ENCODE measurements at regions of chr6 and their contacts with region 1.

Region 1: GRCh38 chr6:24720604-24721460 is 1.9 kb upstream of the C6orf62 start:
- DNase-seq: peak; percentile 100
- ATAC-seq: peak; percentile 85 to 88
- H3K4me3 ChIP-seq: peak overlapping the region; percentile 82 to 99 (median 87)
- H3K27ac ChIP-seq: peak overlapping the region; percentile 93 to 100 (median 98)
- H3K4me1 ChIP-seq: peaks cover 29 to 37% of the 10 kb centered on the region in 2 donors
- H3K27me3 ChIP-seq: no peaks in the 10 kb centered on the region
- CTCF ChIP-seq: peak in 2 of 5 experiments; percentile 23 to 26
- POLR2A ChIP-seq: peak; percentile 99 to 100

Region 2: DNA sequence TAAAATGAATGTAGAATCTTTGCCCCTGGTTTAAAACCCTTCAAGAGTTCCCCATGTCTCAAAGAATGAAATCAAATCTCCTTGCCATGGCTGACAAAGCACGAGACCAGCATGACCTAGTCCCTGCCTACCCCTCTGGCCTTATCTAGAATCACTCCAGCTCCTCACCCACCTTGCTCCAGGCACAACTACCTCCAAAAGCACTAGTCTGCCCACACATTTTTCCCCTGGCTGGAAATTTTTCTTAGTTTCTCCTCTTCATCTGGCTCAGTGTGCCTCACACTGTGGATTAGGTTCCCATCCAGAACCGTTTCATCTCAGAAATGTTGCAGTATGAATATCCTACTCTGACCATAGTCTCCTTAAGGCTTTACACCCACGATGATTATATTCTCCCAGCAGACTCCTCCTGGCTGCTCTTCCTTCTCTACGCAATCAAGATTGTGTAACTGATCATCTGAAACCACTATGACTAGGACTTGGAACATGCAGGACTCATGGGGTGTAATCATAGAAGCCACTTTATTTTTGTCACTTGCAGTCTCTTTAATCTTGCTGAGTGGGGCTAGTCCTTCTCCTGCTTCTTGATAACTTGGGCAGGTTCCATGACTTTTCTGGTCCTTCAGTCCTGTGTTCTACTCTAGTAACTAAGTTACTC is 325.9 kb before region 1 on chr6:
- in situ Hi-C with region 1: loop called in 2 of 4 experiments (anchors 10 to 25 kb)
- intact Hi-C with region 1: no loop called
- DNase-seq: peak; percentile 56 to 66
- ATAC-seq: peak; percentile 99
- H3K4me3 ChIP-seq: no peak overlapping the region
- H3K27ac ChIP-seq: peak overlapping the region; percentile 79 to 93 (median 90)
- H3K4me1 ChIP-seq: peaks cover 9 to 13% of the 10 kb centered on the region in 2 donors
- H3K27me3 ChIP-seq: no peaks in the 10 kb centered on the region
- CTCF ChIP-seq: no peak
- POLR2A ChIP-seq: no peak

Region 3: DNA sequence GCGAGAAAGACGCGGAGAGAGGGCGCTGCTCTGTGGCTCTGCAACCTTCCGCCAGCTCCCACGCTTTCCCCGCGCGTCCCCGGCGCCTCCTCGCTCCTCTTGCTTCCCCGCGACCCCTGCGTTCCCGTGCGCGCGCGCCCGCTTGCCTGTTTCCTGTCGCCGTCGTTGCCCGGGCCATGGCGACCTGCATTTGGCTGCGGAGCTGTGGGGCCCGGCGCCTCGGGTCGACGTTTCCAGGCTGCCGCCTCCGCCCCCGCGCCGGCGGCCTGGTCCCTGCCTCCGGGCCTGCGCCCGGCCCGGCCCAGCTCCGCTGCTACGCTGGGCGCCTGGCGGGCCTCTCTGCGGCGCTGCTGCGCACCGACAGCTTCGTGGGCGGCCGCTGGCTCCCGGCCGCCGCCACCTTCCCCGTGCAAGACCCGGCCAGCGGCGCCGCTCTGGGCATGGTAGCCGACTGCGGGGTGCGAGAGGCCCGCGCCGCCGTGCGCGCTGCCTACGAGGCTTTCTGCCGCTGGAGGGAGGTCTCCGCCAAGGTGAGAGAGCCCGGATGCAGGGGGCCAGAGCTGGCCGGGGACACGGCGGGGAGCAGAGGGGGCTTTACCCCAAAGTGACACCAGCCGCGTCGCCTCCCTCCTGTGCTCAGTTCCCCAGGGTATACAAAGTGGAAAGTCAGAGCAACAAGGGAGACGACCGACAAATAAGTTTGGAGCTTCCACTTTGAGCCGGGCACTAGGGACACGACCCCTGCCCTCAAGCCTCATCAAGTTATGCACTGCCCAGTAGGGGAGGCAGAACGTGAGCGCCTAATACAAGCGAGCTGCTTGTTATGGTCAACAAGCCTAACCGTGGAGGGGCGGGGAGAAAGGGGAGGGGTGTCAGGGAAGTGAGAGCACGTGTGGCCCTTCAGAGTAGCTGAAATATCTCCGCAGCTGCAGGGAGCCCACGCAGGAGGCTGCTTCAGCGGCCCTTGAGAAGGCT is 225.7 kb before region 1 on chr6 and contains the start of gene ALDH5A1:
- in situ Hi-C with region 1: no loop called
- intact Hi-C with region 1: loop called (anchors 5 kb)
- DNase-seq: peak; percentile 60 to 65
- ATAC-seq: peak; percentile 79 to 82
- H3K4me3 ChIP-seq: peak within 1 kb of the TSS; percentile 68 to 78 (median 73)
- H3K27ac ChIP-seq: peak within 1 kb of the TSS; percentile 82 to 90 (median 87)
- H3K4me1 ChIP-seq: peaks cover 17 to 25% of the 10 kb centered on the region in 2 donors
- H3K27me3 ChIP-seq: no peaks in the 10 kb centered on the region
- CTCF ChIP-seq: peak in 4 of 5 experiments; percentile 3 to 21 (median 15)
- POLR2A ChIP-seq: peak; percentile 7 to 22
- total RNA-seq, gene ALDH5A1: 6.4 to 15.4 (median 6.8) TPM

Region 4: GRCh38 chr6:24774696-24775519 is 54.1 kb after region 1 on chr6 and contains the start of gene GMNN:
- in situ Hi-C with region 1: loop called in 1 of 4 experiments (anchors 10 kb)
- intact Hi-C with region 1: loop called (anchors 1 kb)
- DNase-seq: peak; percentile 94 to 95
- ATAC-seq: peak; percentile 96 to 98
- H3K4me3 ChIP-seq: peak within 1 kb of the TSS; percentile 90 to 100 (median 95)
- H3K27ac ChIP-seq: peak within 1 kb of the TSS; percentile 95 to 100 (median 98)
- H3K4me1 ChIP-seq: peaks cover 11 to 15% of the 10 kb centered on the region in 2 donors
- H3K27me3 ChIP-seq: no peaks in the 10 kb centered on the region
- CTCF ChIP-seq: no peak
- POLR2A ChIP-seq: peak; percentile 59 to 62
- total RNA-seq, gene GMNN: 2.6 to 4.4 (median 3.3) TPM

Region 5: DNA sequence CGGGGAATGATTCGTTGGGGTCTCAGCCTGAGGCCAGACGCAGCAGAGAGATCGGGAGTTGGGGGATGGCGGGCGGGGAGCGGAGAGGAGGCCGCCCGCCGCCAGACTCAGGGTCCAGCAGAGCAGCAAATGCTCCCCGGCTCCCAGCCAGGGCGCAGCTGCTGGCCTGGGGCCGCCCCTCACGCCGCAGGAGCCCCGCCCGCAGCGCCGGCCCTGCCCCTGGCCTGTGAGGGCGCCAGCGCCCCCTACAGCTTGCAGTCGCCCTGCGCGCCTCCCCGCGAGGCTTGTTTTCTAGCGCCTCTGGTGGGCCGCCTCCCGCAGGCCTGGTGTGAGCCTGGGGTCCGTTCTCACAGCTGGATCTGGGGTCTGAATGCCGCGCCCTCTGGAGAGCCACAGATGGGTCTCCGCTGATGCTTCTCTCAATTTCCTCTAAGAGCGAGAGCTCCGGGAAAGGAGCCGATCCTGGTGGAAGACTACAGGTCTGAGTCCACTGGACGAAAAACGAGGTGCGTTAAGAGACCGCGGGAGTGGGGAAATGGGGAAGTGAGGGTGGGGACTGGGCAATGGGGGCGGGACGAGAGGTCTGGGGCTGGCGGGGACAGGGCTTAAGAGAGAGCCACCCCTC is 1271.7 kb after region 1 on chr6:
- in situ Hi-C with region 1: no loop called
- intact Hi-C with region 1: loop called (anchors 2 kb)
- DNase-seq: peak; percentile 83 to 93
- ATAC-seq: peak; percentile 88 to 90
- H3K4me3 ChIP-seq: peak overlapping the region; percentile 63 to 74 (median 70)
- H3K27ac ChIP-seq: peak overlapping the region; percentile 83 to 95 (median 90)
- H3K4me1 ChIP-seq: peaks cover 4 to 6% of the 10 kb centered on the region in 2 donors
- H3K27me3 ChIP-seq: no peaks in the 10 kb centered on the region
- CTCF ChIP-seq: peak; percentile 90 to 100 (median 96)
- POLR2A ChIP-seq: peak; percentile 75 to 76